Activated CD4-positive, alpha-beta T cell treated with anti-CD3 and anti-CD28 coated beads, Interleukin-2, amount 10 ng/mL, durations not matched to agents 24 days and 14 days (primary cell): ENCODE measurements at regions of chr19 and their contacts with region 1.

Region 1: GRCh38 chr19:12333162-12334159 is at the start of gene ZNF563:
- DNase-seq: peak; percentile 99
- H3K4me3 Mint-ChIP-seq: peak within 1 kb of the TSS; percentile 92
- H3K27ac Mint-ChIP-seq: peak within 1 kb of the TSS; percentile 97
- H3K4me1 Mint-ChIP-seq: peaks cover 32% of the 10 kb centered on the region
- H3K27me3 Mint-ChIP-seq: no peaks in the 10 kb centered on the region
- total RNA-seq, gene ZNF563: 2.9 and 3.0 TPM in 2 replicates

Region 2: DNA sequence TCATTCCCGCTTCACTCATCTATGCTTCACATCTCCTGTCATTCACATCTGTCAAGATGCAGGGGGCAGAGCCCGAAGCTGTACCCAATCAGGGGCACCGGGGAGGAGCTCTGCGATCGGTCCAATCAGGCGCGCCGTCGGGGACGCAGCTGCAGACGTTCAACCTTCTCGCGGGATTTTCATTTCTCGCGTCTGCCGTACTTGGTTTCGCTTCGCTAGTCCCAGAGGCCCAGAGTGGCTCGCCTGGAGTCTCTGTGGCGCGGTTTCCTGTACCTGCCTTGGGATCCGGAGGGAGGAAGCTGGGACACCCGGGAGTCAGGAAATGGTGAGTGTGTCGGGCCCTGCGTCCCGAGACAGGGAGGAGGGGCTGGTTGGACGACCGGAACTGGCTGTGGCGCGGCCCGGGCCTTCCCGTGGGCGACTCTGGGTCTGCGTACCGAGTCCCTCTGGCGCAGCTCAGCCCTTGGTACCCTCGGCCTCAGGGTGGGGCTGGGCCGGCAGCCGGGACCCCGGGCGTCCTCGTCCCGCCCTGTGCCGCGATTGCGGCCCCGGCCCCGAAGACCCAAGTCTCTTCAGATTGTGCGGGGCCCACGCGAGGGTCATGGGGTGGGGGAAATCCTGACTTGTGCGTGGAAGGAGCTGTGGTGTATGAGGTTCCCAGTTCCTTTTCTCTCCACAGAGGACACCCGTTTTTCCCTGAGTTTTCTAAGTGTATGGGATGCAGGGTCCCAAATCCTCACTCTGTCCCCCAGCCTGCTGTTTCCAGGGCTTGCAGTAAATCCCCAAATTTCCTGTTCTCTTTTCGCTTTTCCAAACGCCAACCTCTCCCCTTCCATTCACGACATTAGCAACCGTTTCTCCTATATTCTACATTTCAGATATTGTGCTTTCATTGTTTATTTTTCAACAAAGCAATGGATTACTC is 170.3 kb before region 1 on chr19 and contains the start of gene ZNF136:
- intact Hi-C with region 1: loop called (anchors 1 kb)
- DNase-seq: peak; percentile 98
- H3K4me3 Mint-ChIP-seq: peak within 1 kb of the TSS; percentile 95
- H3K27ac Mint-ChIP-seq: peak within 1 kb of the TSS; percentile 96
- H3K4me1 Mint-ChIP-seq: peaks cover 28% of the 10 kb centered on the region
- H3K27me3 Mint-ChIP-seq: no peaks in the 10 kb centered on the region
- total RNA-seq, gene ZNF136: 9.4 and 10.3 TPM in 2 replicates

Region 3: DNA sequence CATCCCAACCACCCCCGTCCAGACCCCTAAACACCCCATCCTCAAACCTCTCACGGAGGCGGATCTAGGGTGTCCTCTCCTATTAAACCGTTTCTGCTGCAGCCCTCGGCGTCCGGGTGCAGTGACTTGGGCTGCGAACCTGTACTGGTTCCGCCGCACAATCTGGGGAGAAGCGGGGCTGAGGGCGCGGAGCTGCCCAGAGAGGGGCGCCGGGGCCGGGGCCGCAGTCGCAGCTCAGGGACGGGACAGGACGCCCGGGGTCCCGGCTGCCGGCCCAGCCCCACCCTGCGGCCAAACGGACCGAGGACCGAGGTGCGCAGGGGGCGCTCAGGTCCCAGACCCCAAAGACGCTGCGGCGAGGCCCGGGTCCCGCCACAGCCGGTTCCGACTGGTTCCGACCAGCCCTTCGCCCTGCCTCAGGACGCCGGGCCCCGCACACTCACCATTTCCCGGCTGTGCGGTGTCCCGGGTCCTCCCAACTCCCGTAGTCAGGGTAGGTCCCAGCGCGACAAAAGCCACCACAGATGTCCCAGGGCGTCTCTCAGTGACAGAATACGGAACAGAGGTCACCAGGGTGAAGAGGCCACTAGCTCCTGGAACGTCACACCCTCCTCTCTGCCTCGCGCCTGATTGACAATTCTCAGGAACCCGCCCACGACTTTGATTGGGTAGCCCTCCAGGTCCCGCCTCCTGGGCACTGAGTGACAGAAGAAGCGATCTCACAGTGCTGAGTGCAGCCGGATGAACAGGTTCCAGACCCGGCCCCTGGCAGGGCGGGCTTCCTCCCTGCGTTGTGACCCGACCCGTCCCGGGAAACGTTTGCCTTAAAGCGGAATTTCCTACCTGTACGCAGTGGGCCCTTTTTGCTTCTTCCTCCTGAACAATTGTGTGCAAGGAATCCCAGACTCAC is 39.0 kb before region 1 on chr19 and contains the start of gene ZNF44:
- intact Hi-C with region 1: loop called (anchors 1 kb)
- DNase-seq: peak; percentile 99
- H3K4me3 Mint-ChIP-seq: peak within 1 kb of the TSS; percentile 98
- H3K27ac Mint-ChIP-seq: peak within 1 kb of the TSS; percentile 98
- H3K4me1 Mint-ChIP-seq: peaks cover 27% of the 10 kb centered on the region
- H3K27me3 Mint-ChIP-seq: no peaks in the 10 kb centered on the region
- total RNA-seq, gene ZNF44: 8.4 TPM in 2 replicates

Region 4: GRCh38 chr19:12346896-12347295 is 13.4 kb after region 1 on chr19:
- intact Hi-C with region 1: no loop called
- DNase-seq: no peak
- H3K4me3 Mint-ChIP-seq: no peak overlapping the region
- H3K27ac Mint-ChIP-seq: no peak overlapping the region
- H3K4me1 Mint-ChIP-seq: no peaks in the 10 kb centered on the region
- H3K27me3 Mint-ChIP-seq: no peaks in the 10 kb centered on the region

Region 5: DNA sequence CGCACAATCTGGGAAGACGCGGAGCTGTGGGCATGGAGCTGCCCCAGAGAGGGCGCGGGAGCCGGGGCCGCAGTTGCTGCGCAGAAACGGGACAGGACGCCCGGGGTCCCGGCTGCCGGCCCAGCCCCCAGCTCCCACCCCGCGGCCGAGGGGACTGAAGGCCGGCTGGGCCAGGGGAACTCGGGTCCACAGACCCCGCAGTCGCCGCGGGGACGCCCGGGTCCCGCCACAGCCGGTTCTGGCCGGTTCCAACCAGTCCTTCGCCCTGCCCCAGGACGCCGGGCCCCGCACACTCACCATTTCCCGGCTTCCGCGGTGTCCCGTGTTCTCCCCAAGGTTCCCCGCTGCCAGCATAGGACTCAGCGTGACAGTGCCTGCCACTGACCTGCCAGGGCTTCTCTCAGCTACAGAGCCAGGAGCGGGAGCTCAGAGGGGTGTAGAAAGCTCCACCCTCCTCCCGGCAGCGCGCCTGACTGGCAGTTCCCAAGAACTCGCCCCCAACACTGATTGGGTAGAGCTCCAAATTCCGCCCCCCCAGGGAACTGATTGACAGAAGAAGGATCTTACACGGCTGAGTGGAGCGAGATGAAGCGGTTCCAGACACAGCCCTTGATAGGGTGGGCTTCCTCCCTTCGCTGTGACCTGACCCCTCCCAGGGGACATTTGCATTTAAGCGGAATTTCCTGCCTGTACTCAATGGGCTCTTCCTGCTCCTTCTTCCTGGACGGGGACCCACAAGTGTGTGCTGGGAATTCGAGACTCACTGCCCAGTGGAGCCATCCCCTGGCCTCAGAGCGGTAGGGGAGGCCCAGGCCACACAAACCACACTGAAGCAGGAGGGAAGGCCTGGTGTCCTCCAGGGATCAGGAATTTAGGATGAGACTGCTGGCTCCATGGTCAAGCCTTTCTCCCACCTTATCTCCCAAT is 32.0 kb after region 1 on chr19 and contains the start of gene ZNF442:
- intact Hi-C with region 1: loop called (anchors 1 kb)
- DNase-seq: peak; percentile 91
- H3K4me3 Mint-ChIP-seq: peak within 1 kb of the TSS; percentile 93
- H3K27ac Mint-ChIP-seq: peak within 1 kb of the TSS; percentile 82
- H3K4me1 Mint-ChIP-seq: peaks cover 14% of the 10 kb centered on the region
- H3K27me3 Mint-ChIP-seq: peaks cover 1% of the 10 kb centered on the region
- total RNA-seq, gene ZNF442: 0.56 and 1.2 TPM in 2 replicates

Region 6: GRCh38 chr19:12400633-12401502 is 67.4 kb after region 1 on chr19 and contains the start of gene ZNF799:
- intact Hi-C with region 1: loop called (anchors 1 kb)
- DNase-seq: peak; percentile 95
- H3K4me3 Mint-ChIP-seq: peak within 1 kb of the TSS; percentile 93
- H3K27ac Mint-ChIP-seq: peak within 1 kb of the TSS; percentile 83
- H3K4me1 Mint-ChIP-seq: peaks cover 14% of the 10 kb centered on the region
- H3K27me3 Mint-ChIP-seq: no peaks in the 10 kb centered on the region
- total RNA-seq, gene ZNF799: 3.9 and 4.0 TPM in 2 replicates

Region 7: DNA sequence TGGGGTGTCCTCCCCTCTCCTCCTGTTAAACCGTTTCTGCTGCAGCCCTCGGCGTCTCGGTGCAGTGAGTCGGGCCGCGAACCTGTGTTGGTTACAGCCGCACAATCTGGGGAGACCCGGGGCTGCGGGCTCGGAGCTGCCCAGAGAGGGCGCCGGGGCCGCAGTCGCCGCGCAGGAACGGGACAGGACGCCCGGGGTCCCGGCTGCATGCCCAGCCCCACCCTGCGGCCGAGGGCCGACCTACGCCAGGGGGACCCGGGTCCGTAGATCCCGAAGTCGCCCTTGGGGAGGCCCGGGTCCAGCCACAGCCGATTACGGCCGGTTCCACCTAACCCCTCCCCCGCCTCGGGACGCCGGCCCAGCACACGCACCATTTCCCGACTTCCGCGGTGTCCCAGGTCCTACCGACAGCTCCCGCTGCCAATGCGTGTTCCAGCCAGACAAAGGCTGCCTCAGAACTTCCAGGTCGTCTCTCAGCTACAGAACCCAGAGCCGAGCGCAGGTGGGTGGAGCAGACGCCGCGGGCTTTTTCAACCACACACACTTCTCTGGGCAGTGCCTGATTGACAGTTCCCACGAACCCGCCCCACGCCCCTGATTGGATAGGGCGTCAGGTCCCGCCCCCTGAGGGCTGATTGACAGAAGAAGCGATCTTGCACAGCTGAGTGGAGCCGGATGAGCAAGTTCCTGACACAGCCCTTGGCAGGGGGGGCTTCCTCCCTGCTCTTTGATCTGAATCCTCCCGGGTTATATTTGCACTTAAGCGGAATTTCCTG is 107.3 kb after region 1 on chr19 and contains the start of gene ZNF443:
- intact Hi-C with region 1: loop called (anchors 2 kb)
- DNase-seq: peak; percentile 100
- H3K4me3 Mint-ChIP-seq: peak within 1 kb of the TSS; percentile 98
- H3K27ac Mint-ChIP-seq: peak within 1 kb of the TSS; percentile 92
- H3K4me1 Mint-ChIP-seq: peaks cover 11% of the 10 kb centered on the region
- H3K27me3 Mint-ChIP-seq: no peaks in the 10 kb centered on the region
- total RNA-seq, gene ZNF443: 4.8 and 5.7 TPM in 2 replicates

Region 8: GRCh38 chr19:12551060-12551832 is 217.8 kb after region 1 on chr19 and contains the start of gene ZNF564:
- intact Hi-C with region 1: loop called (anchors 2 kb)
- DNase-seq: peak; percentile 98
- H3K4me3 Mint-ChIP-seq: peak within 1 kb of the TSS; percentile 95
- H3K27ac Mint-ChIP-seq: peak within 1 kb of the TSS; percentile 96
- H3K4me1 Mint-ChIP-seq: peaks cover 23% of the 10 kb centered on the region
- H3K27me3 Mint-ChIP-seq: no peaks in the 10 kb centered on the region
- total RNA-seq, gene ZNF564: 5.6 and 7.0 TPM in 2 replicates